ENCODE measurements at regions of chr12 and their contacts with region 1.

Region 1: DNA sequence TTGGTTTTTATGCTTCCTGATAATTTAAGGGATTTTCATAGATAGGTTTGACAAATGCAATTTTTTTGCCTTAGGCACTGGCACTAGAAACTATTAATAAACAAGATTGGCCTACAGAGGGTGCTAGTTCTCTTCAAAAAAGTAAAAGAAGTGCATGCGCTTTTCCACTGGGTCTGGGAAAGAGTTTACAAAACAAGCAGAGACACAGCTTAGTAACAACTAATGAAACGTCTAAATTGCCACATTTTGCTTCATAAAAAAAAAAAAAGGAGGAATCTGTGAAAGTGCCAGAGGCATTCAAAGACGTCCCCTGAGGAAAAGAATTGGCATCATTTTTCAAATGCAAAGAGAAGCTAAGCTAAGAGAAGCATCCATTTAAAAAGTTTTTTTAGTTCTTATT is 58.3 kb upstream of the EEA1 start:
- DNase-seq: no peak
- ATAC-seq: peak; percentile 26
- H3K4me3 Mint-ChIP-seq: peak overlapping the region; percentile 69
- H3K27ac Mint-ChIP-seq: peak overlapping the region; percentile 89
- H3K4me1 Mint-ChIP-seq: peaks cover 33% of the 10 kb centered on the region
- H3K27me3 Mint-ChIP-seq: no peaks in the 10 kb centered on the region
- CTCF ChIP-seq: peak; percentile 93

Region 2: DNA sequence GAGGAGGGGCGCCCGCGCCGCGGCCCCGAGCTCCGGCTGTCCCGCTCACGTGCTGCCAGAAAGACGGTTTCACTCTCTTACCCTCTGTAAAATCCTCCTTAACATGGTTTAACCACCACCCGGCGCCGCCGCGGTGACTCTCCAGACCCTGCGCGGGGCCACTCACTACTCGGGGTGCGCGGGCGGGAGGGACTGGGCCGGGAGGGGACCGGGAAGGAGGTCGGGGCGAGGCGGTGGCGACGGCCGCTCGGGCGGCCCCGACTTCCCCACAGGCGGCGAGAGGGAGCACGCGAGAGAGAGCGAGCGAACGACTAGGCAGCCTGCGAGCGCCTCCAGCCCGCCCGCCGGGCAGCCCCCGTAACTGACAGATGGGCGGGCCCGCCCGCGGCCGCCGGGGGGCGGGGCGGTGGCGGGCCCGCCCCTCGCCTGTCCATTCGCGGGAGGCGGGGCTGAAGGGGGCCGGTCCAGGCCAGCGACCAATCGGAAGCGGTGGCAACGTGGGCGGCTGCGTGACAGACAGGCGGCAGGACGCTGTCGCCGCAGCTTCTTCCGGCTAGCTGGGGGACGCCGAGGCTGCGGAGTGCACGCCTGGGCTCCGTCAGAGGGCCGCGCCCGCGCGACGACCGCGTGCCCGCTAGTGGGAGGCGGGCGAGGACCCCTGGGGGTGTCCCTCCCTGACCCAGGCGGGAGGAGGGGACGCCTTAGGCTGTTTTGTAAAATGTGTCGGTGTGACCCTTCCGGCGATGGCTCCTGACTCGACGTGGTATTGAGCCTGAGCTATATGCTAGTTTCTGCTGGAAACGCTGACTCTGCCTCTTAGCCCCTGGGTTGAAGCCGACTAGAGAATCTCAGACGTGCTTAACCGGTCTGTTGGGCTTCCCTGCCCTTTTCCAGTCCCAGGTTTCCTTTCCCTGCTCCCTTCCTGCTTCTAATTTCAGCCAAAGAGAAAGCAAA is 58.1 kb before region 1 on chr12 and contains the start of gene EEA1:
- CTCF ChIA-PET with region 1: interaction called, 7 read pairs
- POLR2A ChIA-PET with region 1: interaction called, 40 read pairs
- intact Hi-C with region 1: loop called (anchors 1 kb)
- DNase-seq: peak; percentile 91
- ATAC-seq: peak; percentile 84
- H3K4me3 Mint-ChIP-seq: peak within 1 kb of the TSS; percentile 89
- H3K27ac Mint-ChIP-seq: peak within 1 kb of the TSS; percentile 96
- H3K4me1 Mint-ChIP-seq: peaks cover 32% of the 10 kb centered on the region
- H3K27me3 Mint-ChIP-seq: no peaks in the 10 kb centered on the region
- CTCF ChIP-seq: no peak
- total RNA-seq, gene EEA1: 21.3 and 22.6 TPM in 2 replicates

Region 3: GRCh38 chr12:93025145-93025805 is 37.9 kb after region 1 on chr12:
- CTCF ChIA-PET with region 1: interaction called, 3 read pairs
- POLR2A ChIA-PET with region 1: no interaction called
- intact Hi-C with region 1: loop called (anchors 2 kb)
- DNase-seq: no peak
- ATAC-seq: no peak
- H3K4me3 Mint-ChIP-seq: no peak overlapping the region
- H3K27ac Mint-ChIP-seq: no peak overlapping the region
- H3K4me1 Mint-ChIP-seq: no peaks in the 10 kb centered on the region
- H3K27me3 Mint-ChIP-seq: no peaks in the 10 kb centered on the region
- CTCF ChIP-seq: no peak

Region 4: DNA sequence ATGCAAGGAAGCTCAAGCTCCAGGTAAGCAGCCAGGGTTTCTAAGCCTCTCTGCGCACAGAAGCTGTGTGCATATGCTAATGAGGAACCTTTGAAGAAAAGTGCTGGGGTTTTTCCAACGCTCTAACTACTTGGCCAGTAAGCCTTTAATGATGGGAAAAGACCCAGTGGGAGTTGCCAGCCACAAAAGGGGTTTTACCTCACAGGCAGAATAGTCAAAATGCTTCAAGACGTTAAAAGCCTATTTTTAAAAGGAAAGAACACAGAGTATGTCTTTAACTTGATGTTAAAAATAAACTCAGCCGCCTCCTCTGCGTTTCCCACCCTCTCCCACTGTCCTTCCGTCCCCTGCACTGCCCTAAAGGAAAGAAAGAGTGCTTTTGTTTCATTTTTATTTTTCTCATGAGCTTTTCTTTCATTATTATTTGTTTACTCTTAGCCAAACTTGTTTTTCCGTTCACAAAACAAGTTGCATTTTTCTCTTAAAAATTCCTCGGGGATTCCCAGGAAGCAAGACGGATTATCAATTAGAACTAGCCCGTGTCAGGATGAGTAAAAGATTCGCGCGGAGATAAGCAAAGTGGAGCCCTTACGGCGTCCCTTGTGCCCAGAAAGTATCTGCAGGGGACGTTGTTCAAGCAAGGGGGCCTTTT is 180.6 kb after region 1 on chr12:
- CTCF ChIA-PET with region 1: no interaction called
- POLR2A ChIA-PET with region 1: interaction called, 3 read pairs
- intact Hi-C with region 1: loop called (anchors 1 kb)
- DNase-seq: no peak
- ATAC-seq: peak; percentile 80
- H3K4me3 Mint-ChIP-seq: peak overlapping the region; percentile 80
- H3K27ac Mint-ChIP-seq: peak overlapping the region; percentile 80
- H3K4me1 Mint-ChIP-seq: peaks cover 60% of the 10 kb centered on the region
- H3K27me3 Mint-ChIP-seq: no peaks in the 10 kb centered on the region
- CTCF ChIP-seq: no peak

Region 5: DNA sequence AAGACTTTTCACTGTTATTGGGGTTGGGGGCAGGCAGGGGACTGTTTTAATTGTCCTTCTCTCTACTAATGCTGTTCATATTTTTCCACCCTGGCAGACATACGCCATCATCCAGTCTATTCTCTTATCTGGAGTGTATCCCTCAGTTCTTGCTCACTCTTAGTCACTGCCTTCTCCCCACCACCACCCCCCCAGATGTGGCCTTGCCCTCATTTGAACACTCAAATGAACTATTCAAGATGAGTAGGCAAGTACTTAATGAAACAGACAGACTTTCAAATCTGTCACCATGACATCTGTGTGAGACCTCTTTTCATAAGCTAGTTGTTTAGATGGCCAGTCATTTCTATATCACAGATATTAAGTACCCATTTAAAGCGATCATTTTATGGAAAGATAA is 400.4 kb after region 1 on chr12:
- CTCF ChIA-PET with region 1: interaction called, 45 read pairs
- POLR2A ChIA-PET with region 1: interaction called, 3 read pairs
- intact Hi-C with region 1: no loop called
- DNase-seq: no peak
- ATAC-seq: no peak
- H3K4me3 Mint-ChIP-seq: no peak overlapping the region
- H3K27ac Mint-ChIP-seq: no peak overlapping the region
- H3K4me1 Mint-ChIP-seq: peaks cover 63% of the 10 kb centered on the region
- H3K27me3 Mint-ChIP-seq: no peaks in the 10 kb centered on the region
- CTCF ChIP-seq: no peak

Region 6: GRCh38 chr12:93467351-93468007 is 480.1 kb after region 1 on chr12 and contains the start of gene MRPL42:
- CTCF ChIA-PET with region 1: no interaction called
- POLR2A ChIA-PET with region 1: no interaction called
- intact Hi-C with region 1: loop called (anchors 1 kb)
- DNase-seq: peak; percentile 93
- ATAC-seq: peak; percentile 92
- H3K4me3 Mint-ChIP-seq: peak within 1 kb of the TSS; percentile 95
- H3K27ac Mint-ChIP-seq: peak within 1 kb of the TSS; percentile 94
- H3K4me1 Mint-ChIP-seq: peaks cover 23% of the 10 kb centered on the region
- H3K27me3 Mint-ChIP-seq: no peaks in the 10 kb centered on the region
- CTCF ChIP-seq: no peak
- total RNA-seq, gene MRPL42: 40.9 and 44.6 TPM in 2 replicates